ENCODE measurements at regions of chr1 and their contacts with region 1.

Region 1: GRCh38 chr1:247373721-247374141 is 42.1 kb upstream of the ZNF496 start:
- DNase-seq: peak; percentile 44 to 59 (median 49)
- H3K4me3 ChIP-seq: peak overlapping the region; percentile 3 to 62 (median 18)
- H3K4me3 Mint-ChIP-seq: peak overlapping the region; percentile 33 to 58
- H3K27ac ChIP-seq: no peak overlapping the region
- H3K27ac Mint-ChIP-seq: no peak overlapping the region
- H3K4me1 ChIP-seq: peaks cover 5 to 9% of the 10 kb centered on the region in 2 donors
- H3K4me1 Mint-ChIP-seq: peaks cover 15% of the 10 kb centered on the region
- H3K27me3 ChIP-seq: no peaks in the 10 kb centered on the region
- H3K27me3 Mint-ChIP-seq: peaks cover 1 to 3% (median 2%) of the 10 kb centered on the region in 3 donors
- CTCF ChIP-seq: peak; percentile 65

Region 2: DNA sequence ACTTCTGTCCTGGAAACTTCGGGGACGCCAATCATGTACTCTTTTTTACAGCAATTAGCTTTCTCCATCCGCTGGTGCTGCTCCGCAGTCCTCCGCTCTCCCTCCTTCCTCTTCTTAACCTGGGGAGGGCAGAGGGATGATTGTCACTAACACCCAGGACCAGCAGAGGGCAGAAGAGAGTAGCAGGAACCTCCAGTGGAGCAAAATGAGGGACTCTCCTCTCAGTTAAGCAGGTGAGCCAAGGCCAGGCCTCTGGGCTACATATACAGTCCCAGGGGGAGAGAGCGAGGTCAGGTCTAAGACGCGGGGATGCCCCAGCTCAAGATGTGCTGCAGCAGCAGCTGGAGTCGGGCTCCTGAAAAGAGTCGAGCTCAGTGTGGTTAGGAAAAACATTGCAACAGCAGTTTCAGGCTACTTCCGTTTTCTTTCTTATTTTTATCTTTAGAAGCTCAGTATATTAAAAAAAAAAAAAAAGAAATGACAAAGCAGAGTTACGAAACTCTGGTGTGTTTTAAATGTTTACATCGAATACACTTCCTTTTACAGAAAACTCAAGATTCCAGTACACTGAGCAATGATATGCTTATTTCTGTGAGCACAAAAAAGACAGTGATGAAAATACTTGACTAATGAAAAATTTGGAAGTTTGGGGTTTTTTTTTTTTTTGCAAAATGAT is 16.5 kb after region 1 on chr1:
- intact Hi-C with region 1: no loop called
- DNase-seq: peak; percentile 92 to 99 (median 98)
- H3K4me3 ChIP-seq: peak overlapping the region; percentile 18 to 66 (median 33)
- H3K4me3 Mint-ChIP-seq: peak overlapping the region; percentile 71 to 91
- H3K27ac ChIP-seq: peak overlapping the region; percentile 84 to 85
- H3K27ac Mint-ChIP-seq: peak overlapping the region; percentile 94 to 99 (median 95)
- H3K4me1 ChIP-seq: peaks cover 51 to 57% of the 10 kb centered on the region in 2 donors
- H3K4me1 Mint-ChIP-seq: peaks cover 52% of the 10 kb centered on the region
- H3K27me3 ChIP-seq: no peaks in the 10 kb centered on the region
- H3K27me3 Mint-ChIP-seq: peaks cover 0 to 3% (median 0%) of the 10 kb centered on the region in 3 donors
- CTCF ChIP-seq: peak; percentile 96

Region 3: GRCh38 chr1:247576495-247576894 is 202.8 kb after region 1 on chr1:
- intact Hi-C with region 1: loop called in 1 of 2 experiments (anchors 2 kb)
- DNase-seq: peak; percentile 3 to 50 (median 17)
- H3K4me3 ChIP-seq: no peak overlapping the region
- H3K4me3 Mint-ChIP-seq: no peak overlapping the region
- H3K27ac ChIP-seq: no peak overlapping the region
- H3K27ac Mint-ChIP-seq: no peak overlapping the region
- H3K4me1 ChIP-seq: no peaks in the 10 kb centered on the region
- H3K4me1 Mint-ChIP-seq: peaks cover 5% of the 10 kb centered on the region
- H3K27me3 ChIP-seq: no peaks in the 10 kb centered on the region
- H3K27me3 Mint-ChIP-seq: peaks cover 0 to 8% (median 2%) of the 10 kb centered on the region in 3 donors
- CTCF ChIP-seq: peak; percentile 70

Measured in CD14-positive monocyte (primary cell).